Gastrocnemius medialis (tissue), 4 donors: ENCODE measurements at regions of chr6 and their contacts with region 1.

Region 1: GRCh38 chr6:135451693-135452092 is 45.8 kb downstream of the AHI1 start:
- DNase-seq: no peak
- ATAC-seq: no peak
- H3K4me3 ChIP-seq: no peak overlapping the region
- H3K27ac ChIP-seq: no peak overlapping the region
- H3K4me1 ChIP-seq: no peaks in the 10 kb centered on the region
- H3K27me3 ChIP-seq: no peaks in the 10 kb centered on the region
- CTCF ChIP-seq: peak in 4 of 5 experiments; percentile 35 to 76 (median 57)
- POLR2A ChIP-seq: no peak

Region 2: GRCh38 chr6:135233686-135234489 is 217.8 kb before region 1 on chr6:
- in situ Hi-C with region 1: no loop called
- intact Hi-C with region 1: no loop called
- DNase-seq: no peak
- ATAC-seq: no peak
- H3K4me3 ChIP-seq: no peak overlapping the region
- H3K27ac ChIP-seq: no peak overlapping the region
- H3K4me1 ChIP-seq: no peaks in the 10 kb centered on the region
- H3K27me3 ChIP-seq: no peaks in the 10 kb centered on the region
- CTCF ChIP-seq: no peak
- POLR2A ChIP-seq: no peak

Region 3: DNA sequence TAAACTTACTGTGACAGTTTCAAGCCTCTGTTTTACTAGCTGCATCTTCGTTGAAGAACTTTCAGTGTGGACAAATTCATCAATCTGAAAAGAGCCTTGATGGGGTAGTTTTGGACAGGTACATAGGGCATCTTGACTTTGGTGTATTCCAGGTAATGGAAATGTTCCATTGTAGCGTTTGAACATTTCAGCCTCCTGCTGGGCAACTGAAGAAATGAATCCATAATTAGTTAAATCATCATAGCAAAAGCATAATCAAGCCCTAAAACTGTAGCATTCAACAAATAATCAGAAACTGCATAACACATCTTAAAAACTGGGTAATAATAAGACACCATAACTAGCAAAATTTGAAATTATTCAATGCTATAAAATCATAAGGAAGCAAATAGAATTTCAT is 40.4 kb before region 1 on chr6:
- in situ Hi-C with region 1: no loop called
- intact Hi-C with region 1: no loop called
- DNase-seq: no peak
- ATAC-seq: no peak
- H3K4me3 ChIP-seq: no peak overlapping the region
- H3K27ac ChIP-seq: no peak overlapping the region
- H3K4me1 ChIP-seq: no peaks in the 10 kb centered on the region
- H3K27me3 ChIP-seq: no peaks in the 10 kb centered on the region
- CTCF ChIP-seq: no peak
- POLR2A ChIP-seq: no peak

Region 4: GRCh38 chr6:135941275-135942025 is 489.8 kb after region 1 on chr6:
- in situ Hi-C with region 1: no loop called
- intact Hi-C with region 1: no loop called
- DNase-seq: no peak
- ATAC-seq: no peak
- H3K4me3 ChIP-seq: no peak overlapping the region
- H3K27ac ChIP-seq: no peak overlapping the region
- H3K4me1 ChIP-seq: peaks cover 3 to 7% of the 10 kb centered on the region in 2 donors
- H3K27me3 ChIP-seq: no peaks in the 10 kb centered on the region
- CTCF ChIP-seq: no peak
- POLR2A ChIP-seq: no peak

Region 5: GRCh38 chr6:136059308-136059707 is 607.6 kb after region 1 on chr6:
- in situ Hi-C with region 1: no loop called
- intact Hi-C with region 1: no loop called
- DNase-seq: no peak
- ATAC-seq: no peak
- H3K4me3 ChIP-seq: no peak overlapping the region
- H3K27ac ChIP-seq: peak overlapping the region in 3 of 4 donors; percentile 6 to 42 (median 22)
- H3K4me1 ChIP-seq: peaks cover 5 to 31% of the 10 kb centered on the region in 2 donors
- H3K27me3 ChIP-seq: no peaks in the 10 kb centered on the region
- CTCF ChIP-seq: no peak
- POLR2A ChIP-seq: no peak

Region 6: DNA sequence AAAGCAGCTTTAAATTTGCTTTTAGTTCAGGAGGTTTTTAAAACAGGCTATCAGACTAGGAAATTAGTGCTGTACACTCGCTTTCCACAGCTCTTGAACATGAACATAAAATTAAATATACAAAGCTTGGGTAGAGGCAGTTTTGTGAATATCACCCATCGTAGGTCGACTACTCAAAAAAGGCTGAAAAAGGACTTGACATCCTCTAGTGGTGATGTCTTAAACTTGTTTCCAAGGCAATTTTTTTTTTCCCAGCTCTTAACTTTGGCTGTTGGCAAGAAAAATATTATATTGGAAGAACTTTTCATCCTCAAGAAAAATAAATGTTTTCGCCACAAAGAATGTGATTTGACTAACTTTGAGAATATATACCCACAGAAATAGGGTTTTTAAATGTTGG is 1095.6 kb after region 1 on chr6:
- in situ Hi-C with region 1: no loop called
- intact Hi-C with region 1: loop called (anchors 10 kb)
- DNase-seq: no peak
- ATAC-seq: no peak
- H3K4me3 ChIP-seq: no peak overlapping the region
- H3K27ac ChIP-seq: no peak overlapping the region
- H3K4me1 ChIP-seq: peaks cover 0 to 11% of the 10 kb centered on the region in 2 donors
- H3K27me3 ChIP-seq: peaks cover 37 to 46% (median 38%) of the 10 kb centered on the region in 3 donors
- CTCF ChIP-seq: no peak
- POLR2A ChIP-seq: no peak